ENCODE measurements at regions of chr5 and their contacts with region 1.

Region 1: DNA sequence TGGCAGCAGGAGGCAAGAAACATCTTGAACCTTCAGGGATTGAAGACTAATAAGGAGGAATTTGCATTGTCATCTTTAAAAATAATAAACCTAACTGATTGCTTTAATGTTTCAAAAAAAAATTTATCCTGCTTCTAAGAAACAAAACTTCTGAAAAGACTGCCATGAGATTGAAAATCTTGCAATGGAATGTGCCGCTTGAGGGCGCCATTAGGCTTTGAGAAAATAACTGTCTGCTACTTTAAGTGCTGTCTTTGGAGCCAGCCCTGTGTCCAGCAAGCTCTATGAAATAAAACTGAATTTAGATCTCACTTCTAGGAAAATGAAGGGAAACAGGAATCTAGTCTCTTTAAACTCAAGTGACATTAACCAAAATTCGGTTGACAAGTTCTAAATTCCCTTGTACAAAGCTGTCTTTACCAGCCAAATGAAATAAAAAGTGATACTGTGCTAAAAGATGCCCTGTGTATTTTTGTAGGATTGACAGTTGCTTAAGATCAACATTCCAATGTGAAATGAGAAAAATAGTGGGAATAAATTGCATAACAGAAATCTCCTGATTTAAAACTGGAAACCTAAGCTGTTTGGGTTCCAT is 79.4 kb downstream of the ESM1 start:
- DNase-seq: peak in 4 of 5 donors; percentile 71 to 88 (median 82)
- H3K4me3 ChIP-seq: no peak overlapping the region
- H3K27ac ChIP-seq: no peak overlapping the region
- H3K4me1 ChIP-seq: no peaks in the 10 kb centered on the region
- H3K27me3 ChIP-seq: no peaks in the 10 kb centered on the region
- CTCF ChIP-seq: peak; percentile 58

Region 2: DNA sequence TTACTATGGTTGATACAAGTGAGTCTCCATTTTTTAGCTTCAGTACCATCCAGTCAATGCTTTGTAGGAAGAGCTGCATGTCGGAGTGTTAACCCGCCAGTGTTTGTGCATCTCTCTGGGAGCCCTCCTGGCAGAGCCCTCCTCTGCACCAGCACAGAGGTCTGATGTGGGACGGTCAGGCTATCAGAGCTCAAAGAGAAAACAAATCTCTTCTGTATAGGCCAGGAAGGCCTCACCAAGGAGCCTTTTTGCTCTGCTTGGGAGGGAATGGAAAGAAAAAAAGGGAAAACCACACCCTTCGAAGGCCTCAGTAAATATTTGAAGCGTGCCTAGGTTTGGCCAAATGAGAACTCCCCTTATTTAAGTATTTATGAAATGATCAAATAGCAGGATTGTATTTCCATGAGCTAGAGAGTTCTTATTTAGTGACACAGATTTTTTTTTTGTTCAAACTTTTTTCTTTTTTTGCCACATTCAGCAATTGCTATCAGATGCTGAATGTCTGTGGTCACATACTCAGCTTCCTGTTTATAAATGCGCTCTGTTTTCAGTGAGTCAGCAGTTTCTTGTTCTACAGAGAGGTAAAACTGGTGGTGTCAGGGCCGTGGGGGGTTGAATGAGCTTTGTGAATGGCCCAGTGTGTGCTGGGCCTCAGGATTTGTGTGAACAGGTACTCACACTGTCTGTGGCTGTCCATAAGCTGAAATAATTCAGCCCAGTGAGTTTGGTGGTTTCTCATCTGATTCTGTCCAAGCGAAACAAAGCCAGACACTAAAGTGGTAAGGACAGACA is 161.8 kb before region 1 on chr5:
- intact Hi-C with region 1: no loop called
- DNase-seq: peak in 3 of 5 donors; percentile 26 to 72 (median 69)
- H3K4me3 ChIP-seq: no peak overlapping the region
- H3K27ac ChIP-seq: peak overlapping the region; percentile 23 to 62
- H3K4me1 ChIP-seq: peaks cover 0 to 7% (median 7%) of the 10 kb centered on the region in 3 donors
- H3K27me3 ChIP-seq: no peaks in the 10 kb centered on the region
- CTCF ChIP-seq: no peak

Region 3: GRCh38 chr5:55159763-55160492 is 253.9 kb after region 1 on chr5 and contains the start of gene GPX8:
- intact Hi-C with region 1: loop called (anchors 10 kb)
- DNase-seq: peak in 4 of 5 donors; percentile 73 to 95 (median 84)
- H3K4me3 ChIP-seq: peak within 1 kb of the TSS; percentile 54 to 92 (median 72)
- H3K27ac ChIP-seq: peak within 1 kb of the TSS in 1 of 2 donors; percentile 72
- H3K4me1 ChIP-seq: no peaks in the 10 kb centered on the region
- H3K27me3 ChIP-seq: no peaks in the 10 kb centered on the region
- CTCF ChIP-seq: peak; percentile 53
- total RNA-seq, gene GPX8: 29.7 TPM